K562 (cell line): ENCODE measurements at regions of chr18 and their contacts with region 1.

Region 1: GRCh38 chr18:55415258-55415871 is 172.6 kb downstream of the TCF4 start:
- DNase-seq: peak; percentile 64 to 84 (median 68)
- ATAC-seq: peak; percentile 96
- H3K4me3 ChIP-seq: no peak overlapping the region
- H3K27ac ChIP-seq: no peak overlapping the region
- H3K4me1 ChIP-seq: peaks cover 0 to 2% of the 10 kb centered on the region in 2 experiments; a peak in 1 of 5 replicates
- H3K27me3 ChIP-seq: no peaks in the 10 kb centered on the region
- CTCF ChIP-seq: peak; percentile 68 to 78 (median 78)
- EP300 ChIP-seq: no peak
- POLR2A ChIP-seq: no peak
- RAD21 ChIP-seq: peak; percentile 81 to 86

Region 2: GRCh38 chr18:55522011-55522410 is 106.6 kb after region 1 on chr18:
- CTCF ChIA-PET with region 1: no interaction called
- POLR2A ChIA-PET with region 1: no interaction called
- in situ Hi-C with region 1: no loop called
- intact Hi-C with region 1: loop called (anchors 5 kb)
- DNase-seq: peak; percentile 23 to 71 (median 34)
- ATAC-seq: peak; percentile 77
- H3K4me3 ChIP-seq: no peak overlapping the region
- H3K27ac ChIP-seq: no peak overlapping the region
- H3K4me1 ChIP-seq: peaks cover 0 to 7% of the 10 kb centered on the region in 2 experiments; a peak in 3 of 5 replicates
- H3K27me3 ChIP-seq: no peaks in the 10 kb centered on the region
- CTCF ChIP-seq: peak; percentile 57 to 74 (median 61)
- EP300 ChIP-seq: no peak
- POLR2A ChIP-seq: no peak
- RAD21 ChIP-seq: peak; percentile 38 to 58

Region 3: DNA sequence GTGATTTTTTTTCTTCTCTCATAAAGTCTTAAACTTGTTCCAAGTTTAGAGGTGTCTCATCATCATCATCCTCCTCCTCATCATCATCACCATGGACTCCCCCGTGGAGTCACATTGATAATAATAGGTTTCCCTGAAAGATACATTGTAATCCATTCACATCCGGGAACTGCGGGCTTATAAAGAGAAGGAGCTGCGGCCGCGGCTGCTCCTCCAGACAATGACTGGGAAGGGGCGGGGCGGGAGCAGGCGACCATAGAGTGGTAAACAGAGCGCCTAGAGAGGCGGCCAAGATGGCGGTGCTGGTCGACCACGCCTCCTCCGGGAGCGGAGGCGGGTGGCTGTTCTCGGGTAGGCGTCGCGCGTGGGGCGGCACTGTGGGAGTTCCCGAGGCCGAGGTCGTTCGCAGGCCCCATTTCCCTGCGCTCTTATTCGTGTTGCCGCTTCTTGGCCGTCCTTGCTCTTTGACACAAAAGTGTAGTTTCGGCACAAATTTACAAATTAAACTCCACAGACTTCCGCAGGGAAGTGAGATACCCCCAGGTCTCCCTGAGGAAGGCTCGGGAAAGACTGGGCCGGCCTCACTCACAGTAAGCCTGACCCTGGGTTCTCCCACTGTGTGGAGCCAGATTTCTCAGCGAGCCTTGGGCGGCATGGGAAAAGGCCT is 174.4 kb after region 1 on chr18:
- CTCF ChIA-PET with region 1: no interaction called
- POLR2A ChIA-PET with region 1: no interaction called
- in situ Hi-C with region 1: no loop called
- intact Hi-C with region 1: loop called (anchors 5 kb)
- DNase-seq: peak; percentile 85 to 95 (median 86)
- ATAC-seq: peak; percentile 76
- H3K4me3 ChIP-seq: peak overlapping the region; percentile 63
- H3K27ac ChIP-seq: peak overlapping the region; percentile 89
- H3K4me1 ChIP-seq: peaks cover 6 to 34% of the 10 kb centered on the region in 2 experiments
- H3K27me3 ChIP-seq: no peaks in the 10 kb centered on the region
- CTCF ChIP-seq: no peak
- EP300 ChIP-seq: peak; percentile 24; the same call in 1 of the 2 replicates
- POLR2A ChIP-seq: peak; percentile 84
- RAD21 ChIP-seq: no peak

Region 4: GRCh38 chr18:55781481-55781957 is 366.2 kb after region 1 on chr18:
- CTCF ChIA-PET with region 1: interaction called, 12 read pairs
- POLR2A ChIA-PET with region 1: no interaction called
- in situ Hi-C with region 1: loop called (anchors 10 kb)
- intact Hi-C with region 1: loop called (anchors 1 kb)
- DNase-seq: peak in 3 of 4 experiments; percentile 11 to 54 (median 42)
- ATAC-seq: peak; percentile 75; the same call in 2 of the 3 replicates
- H3K4me3 ChIP-seq: no peak overlapping the region
- H3K27ac ChIP-seq: no peak overlapping the region
- H3K4me1 ChIP-seq: peaks cover 3 to 10% of the 10 kb centered on the region in 2 experiments; a peak in 4 of 5 replicates
- H3K27me3 ChIP-seq: no peaks in the 10 kb centered on the region
- CTCF ChIP-seq: peak; percentile 49 to 66 (median 64); a peak in 5 of 6 replicates
- EP300 ChIP-seq: no peak
- POLR2A ChIP-seq: no peak
- RAD21 ChIP-seq: peak; percentile 80 to 83

Region 5: GRCh38 chr18:55861266-55861665 is 445.9 kb after region 1 on chr18:
- CTCF ChIA-PET with region 1: no interaction called
- POLR2A ChIA-PET with region 1: no interaction called
- in situ Hi-C with region 1: no loop called
- intact Hi-C with region 1: loop called (anchors 10 kb)
- DNase-seq: peak in 1 of 4 experiments; percentile 22
- ATAC-seq: peak; percentile 56; the same call in 2 of the 3 replicates
- H3K4me3 ChIP-seq: no peak overlapping the region
- H3K27ac ChIP-seq: no peak overlapping the region
- H3K4me1 ChIP-seq: no peaks in the 10 kb centered on the region
- H3K27me3 ChIP-seq: peaks cover 5 to 9% of the 10 kb centered on the region in 2 experiments; a peak in 4 of 5 replicates
- CTCF ChIP-seq: peak; percentile 34 to 53 (median 42)
- EP300 ChIP-seq: no peak
- POLR2A ChIP-seq: no peak
- RAD21 ChIP-seq: peak; percentile 46 to 61